MCF 10A (cell line): ENCODE measurements at regions of chr10 and their contacts with region 1.

Region 1: GRCh38 chr10:101141616-101142532 is 10.8 kb downstream of the TLX1 start:
- DNase-seq: peak; percentile 87
- H3K4me3 Mint-ChIP-seq: no peak overlapping the region
- H3K27ac Mint-ChIP-seq: no peak overlapping the region
- H3K4me1 Mint-ChIP-seq: peaks cover 16% of the 10 kb centered on the region
- H3K27me3 Mint-ChIP-seq: peaks cover 41% of the 10 kb centered on the region
- CTCF ChIP-seq: peak; percentile 96

Region 2: GRCh38 chr10:100338434-100339036 is 803.3 kb before region 1 on chr10:
- CTCF ChIA-PET with region 1: no interaction called
- POLR2A ChIA-PET with region 1: no interaction called
- intact Hi-C with region 1: no loop called
- DNase-seq: peak; percentile 70
- H3K4me3 Mint-ChIP-seq: no peak overlapping the region
- H3K27ac Mint-ChIP-seq: no peak overlapping the region
- H3K4me1 Mint-ChIP-seq: peaks cover 13% of the 10 kb centered on the region
- H3K27me3 Mint-ChIP-seq: peaks cover 15% of the 10 kb centered on the region
- CTCF ChIP-seq: peak; percentile 87

Region 3: DNA sequence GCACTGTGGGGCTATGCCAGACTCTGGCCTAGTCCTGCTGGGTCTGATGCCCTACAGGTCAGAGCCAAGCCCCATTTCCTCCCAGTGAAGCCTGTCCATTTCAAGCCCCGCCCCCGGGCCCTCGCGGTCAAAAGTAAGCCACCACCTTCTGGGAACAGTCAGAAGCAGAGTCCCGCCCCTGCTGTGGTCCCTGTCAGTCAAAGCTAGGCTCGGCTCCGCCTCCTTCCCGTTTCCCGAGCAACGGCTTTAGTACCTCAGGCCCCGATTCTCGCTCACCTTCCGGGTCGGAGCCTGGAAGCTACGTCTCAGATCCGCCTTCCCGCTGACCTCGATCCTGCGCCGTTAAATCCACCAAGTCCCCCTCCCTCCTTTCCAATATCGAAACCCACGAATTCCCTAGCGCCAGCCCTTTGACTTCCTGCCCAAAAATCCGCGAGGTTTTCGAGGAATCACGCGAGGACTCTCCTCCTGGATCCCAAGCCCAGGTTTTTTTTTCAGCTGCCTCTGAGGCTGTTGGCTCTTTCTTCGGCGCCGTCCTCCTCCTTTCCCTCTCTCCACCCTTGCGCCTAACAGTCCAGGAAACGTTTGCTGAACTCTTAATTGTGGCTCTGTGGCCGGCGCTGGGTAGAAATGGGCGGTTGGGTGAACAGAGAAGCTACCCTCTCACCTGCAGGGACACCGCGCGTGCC is 99.1 kb before region 1 on chr10:
- CTCF ChIA-PET with region 1: interaction called, 16 read pairs
- POLR2A ChIA-PET with region 1: interaction called, 6 read pairs
- intact Hi-C with region 1: loop called (anchors 1 kb)
- DNase-seq: peak; percentile 98
- H3K4me3 Mint-ChIP-seq: peak overlapping the region; percentile 98
- H3K27ac Mint-ChIP-seq: peak overlapping the region; percentile 100
- H3K4me1 Mint-ChIP-seq: peaks cover 29% of the 10 kb centered on the region
- H3K27me3 Mint-ChIP-seq: no peaks in the 10 kb centered on the region
- CTCF ChIP-seq: no peak

Region 4: DNA sequence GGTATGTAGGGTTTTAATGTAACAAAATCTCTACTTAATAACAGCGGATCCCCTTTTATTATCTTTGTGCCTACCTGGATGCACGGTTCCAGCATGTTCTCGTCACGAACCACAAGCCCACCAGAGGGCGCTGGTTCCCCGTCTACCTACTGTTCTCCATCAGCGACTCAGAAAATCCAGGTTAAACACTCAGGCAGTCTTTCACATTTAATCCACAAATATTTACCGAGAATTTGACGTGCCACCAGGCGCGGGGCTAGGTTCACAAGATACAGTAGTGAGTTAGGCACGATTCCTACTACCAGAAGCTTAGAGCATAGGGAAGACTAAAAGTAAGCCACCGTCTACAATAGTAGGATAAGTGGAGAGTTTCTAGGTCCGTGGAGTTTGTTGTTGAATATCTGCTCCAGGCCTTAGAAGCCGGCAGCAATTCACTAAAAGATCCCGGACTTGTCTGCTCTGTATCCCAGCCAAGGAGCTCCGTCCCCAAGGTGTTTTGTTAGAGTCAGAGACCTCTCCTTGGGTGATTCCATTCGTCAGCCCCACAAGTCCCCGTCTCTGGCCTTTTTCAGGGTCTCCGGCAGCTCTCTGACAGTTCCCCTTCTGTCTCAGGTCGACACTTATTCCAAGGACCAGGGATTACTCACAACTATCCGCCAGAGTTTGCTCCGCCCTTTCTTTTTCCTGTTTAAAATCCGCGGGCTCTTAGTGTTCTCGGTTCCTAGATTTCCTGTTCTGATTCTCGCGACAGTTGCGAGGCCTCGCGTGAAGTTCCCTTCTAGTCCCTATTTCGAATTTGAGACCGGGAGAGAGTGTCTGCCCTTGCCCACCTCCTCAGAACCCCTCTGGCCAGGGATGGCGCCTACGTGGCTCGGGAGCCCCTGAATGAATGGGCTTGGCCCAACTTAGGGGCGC is 81.6 kb before region 1 on chr10:
- CTCF ChIA-PET with region 1: interaction called, 81 read pairs
- POLR2A ChIA-PET with region 1: interaction called, 6 read pairs
- intact Hi-C with region 1: loop called (anchors 1 kb)
- DNase-seq: peak; percentile 98
- H3K4me3 Mint-ChIP-seq: peak overlapping the region; percentile 95
- H3K27ac Mint-ChIP-seq: peak overlapping the region; percentile 97
- H3K4me1 Mint-ChIP-seq: peaks cover 20% of the 10 kb centered on the region
- H3K27me3 Mint-ChIP-seq: no peaks in the 10 kb centered on the region
- CTCF ChIP-seq: peak; percentile 84

Region 5: DNA sequence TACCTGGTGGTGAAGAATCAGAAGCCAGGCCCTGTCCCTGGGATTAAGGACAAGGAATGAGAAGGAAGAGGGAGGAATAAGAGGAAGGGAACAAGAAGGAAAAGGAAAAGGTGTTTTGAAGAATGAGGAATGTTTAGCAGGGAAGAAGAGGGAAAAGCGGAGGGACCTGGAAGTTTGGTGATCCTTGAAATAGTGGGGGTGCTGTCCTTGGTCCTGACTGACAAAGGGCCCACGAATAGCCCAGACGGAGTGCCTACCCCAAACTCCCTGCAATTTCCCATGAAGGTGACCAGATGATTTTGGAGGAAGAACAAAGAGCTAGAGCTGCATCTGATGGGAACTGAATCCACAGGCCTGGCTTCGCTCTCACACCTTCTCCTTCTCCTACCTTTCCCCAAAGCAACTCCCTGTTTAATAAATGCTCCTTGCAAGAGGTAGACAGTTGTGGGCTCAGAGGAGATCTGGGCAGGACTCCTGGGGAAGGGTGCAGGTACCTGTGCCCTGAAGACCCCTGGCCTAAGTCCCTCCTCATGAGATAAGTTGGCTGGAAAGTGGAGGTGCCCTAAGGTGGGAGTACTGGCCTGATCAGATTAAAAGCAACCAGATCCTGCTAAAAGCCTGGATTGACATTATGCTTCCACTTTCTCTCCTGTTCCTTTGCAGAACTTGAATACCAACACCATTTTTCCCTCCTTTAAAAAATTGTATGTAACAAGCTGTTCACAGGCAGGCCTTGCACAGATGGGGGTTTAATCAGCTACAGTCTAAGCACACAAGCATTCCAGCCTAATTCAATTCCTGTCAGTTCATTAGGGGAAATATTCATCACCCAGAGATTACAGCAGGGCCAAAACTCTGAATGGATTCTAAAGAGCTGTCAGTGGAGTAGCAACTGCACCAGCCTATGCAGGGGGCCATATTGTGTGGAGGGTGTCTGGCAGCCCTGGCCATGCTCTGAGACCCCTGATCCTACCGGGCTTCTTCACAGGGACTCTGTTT is 60.6 kb before region 1 on chr10:
- CTCF ChIA-PET with region 1: interaction called, 27 read pairs
- POLR2A ChIA-PET with region 1: interaction called, 4 read pairs
- intact Hi-C with region 1: no loop called
- DNase-seq: peak; percentile 45
- H3K4me3 Mint-ChIP-seq: no peak overlapping the region
- H3K27ac Mint-ChIP-seq: no peak overlapping the region
- H3K4me1 Mint-ChIP-seq: peaks cover 5% of the 10 kb centered on the region
- H3K27me3 Mint-ChIP-seq: peaks cover 45% of the 10 kb centered on the region
- CTCF ChIP-seq: no peak

Region 6: GRCh38 chr10:101110856-101111546 is 30.9 kb before region 1 on chr10:
- CTCF ChIA-PET with region 1: interaction called, 15 read pairs
- POLR2A ChIA-PET with region 1: interaction called, 3 read pairs
- intact Hi-C with region 1: no loop called
- DNase-seq: no peak
- H3K4me3 Mint-ChIP-seq: no peak overlapping the region
- H3K27ac Mint-ChIP-seq: no peak overlapping the region
- H3K4me1 Mint-ChIP-seq: no peaks in the 10 kb centered on the region
- H3K27me3 Mint-ChIP-seq: peaks cover 24% of the 10 kb centered on the region
- CTCF ChIP-seq: no peak

Region 7: GRCh38 chr10:101126684-101127628 is 14.9 kb before region 1 on chr10:
- CTCF ChIA-PET with region 1: interaction called, 17 read pairs
- POLR2A ChIA-PET with region 1: interaction called, 4 read pairs
- intact Hi-C with region 1: no loop called
- DNase-seq: no peak
- H3K4me3 Mint-ChIP-seq: no peak overlapping the region
- H3K27ac Mint-ChIP-seq: no peak overlapping the region
- H3K4me1 Mint-ChIP-seq: no peaks in the 10 kb centered on the region
- H3K27me3 Mint-ChIP-seq: peaks cover 49% of the 10 kb centered on the region
- CTCF ChIP-seq: no peak

Region 8: DNA sequence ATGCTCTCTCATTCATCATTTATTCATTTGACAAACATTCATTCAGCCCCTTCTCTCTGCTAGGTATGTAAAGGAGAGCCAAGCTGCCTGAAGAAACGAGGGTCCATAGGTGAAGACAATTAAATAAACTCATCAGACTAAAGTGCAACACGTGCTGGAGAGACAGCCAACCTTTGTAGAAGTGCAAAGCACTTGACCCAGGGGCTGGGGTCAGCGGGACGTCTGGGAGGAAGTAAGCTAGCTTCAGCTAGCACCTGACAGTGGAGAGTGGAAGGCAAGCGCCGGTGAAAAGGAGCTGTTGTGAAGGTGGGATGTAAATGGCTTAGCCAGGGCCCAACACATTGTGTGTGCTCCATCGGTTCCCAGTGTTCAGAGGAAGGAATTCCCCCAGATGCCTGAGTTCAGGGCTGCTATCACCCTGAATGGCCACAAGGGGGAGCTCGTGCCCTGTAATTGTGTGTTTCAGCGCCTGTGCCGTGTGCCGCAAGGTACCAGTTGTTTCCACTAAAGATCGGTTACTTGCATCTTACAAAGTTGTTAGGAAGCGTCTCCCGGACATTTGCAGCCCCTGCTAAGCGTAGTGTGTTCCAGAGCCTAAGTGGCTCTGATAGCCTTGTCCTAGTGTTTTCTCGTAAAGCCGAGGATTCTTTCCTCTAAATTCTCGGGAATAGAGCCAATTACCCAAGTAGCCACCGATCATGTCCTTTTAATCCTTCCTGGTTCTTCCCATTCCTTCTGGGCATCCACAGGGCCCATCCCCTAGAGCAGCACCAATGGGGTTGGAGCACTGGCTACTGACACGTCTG is 19.8 kb after region 1 on chr10:
- CTCF ChIA-PET with region 1: interaction called, 60 read pairs
- POLR2A ChIA-PET with region 1: interaction called, 3 read pairs
- intact Hi-C with region 1: no loop called
- DNase-seq: peak; percentile 83
- H3K4me3 Mint-ChIP-seq: peak overlapping the region; percentile 63
- H3K27ac Mint-ChIP-seq: no peak overlapping the region
- H3K4me1 Mint-ChIP-seq: peaks cover 19% of the 10 kb centered on the region
- H3K27me3 Mint-ChIP-seq: peaks cover 33% of the 10 kb centered on the region
- CTCF ChIP-seq: peak; percentile 91

Region 9: GRCh38 chr10:101207026-101207425 is 65.2 kb after region 1 on chr10:
- CTCF ChIA-PET with region 1: no interaction called
- POLR2A ChIA-PET with region 1: no interaction called
- intact Hi-C with region 1: no loop called
- DNase-seq: no peak
- H3K4me3 Mint-ChIP-seq: no peak overlapping the region
- H3K27ac Mint-ChIP-seq: no peak overlapping the region
- H3K4me1 Mint-ChIP-seq: no peaks in the 10 kb centered on the region
- H3K27me3 Mint-ChIP-seq: peaks cover 77% of the 10 kb centered on the region
- CTCF ChIP-seq: no peak